ENCODE measurements at regions of chr1 and their contacts with region 1.

Region 1: GRCh38 chr1:150477733-150478132 is 9.5 kb upstream of the TARS2 start:
- DNase-seq: no peak

Region 2: GRCh38 chr1:150321826-150322166 is 155.9 kb before region 1 on chr1:
- intact Hi-C with region 1: no loop called
- DNase-seq: no peak

Region 3: GRCh38 chr1:150372580-150372979 is 105.2 kb before region 1 on chr1:
- intact Hi-C with region 1: loop called (anchors 10 kb)
- DNase-seq: no peak

Measured in posterior cingulate gyrus (tissue), 11 donors.